ENCODE measurements at regions of chr6 and their contacts with region 1.

Region 1: DNA sequence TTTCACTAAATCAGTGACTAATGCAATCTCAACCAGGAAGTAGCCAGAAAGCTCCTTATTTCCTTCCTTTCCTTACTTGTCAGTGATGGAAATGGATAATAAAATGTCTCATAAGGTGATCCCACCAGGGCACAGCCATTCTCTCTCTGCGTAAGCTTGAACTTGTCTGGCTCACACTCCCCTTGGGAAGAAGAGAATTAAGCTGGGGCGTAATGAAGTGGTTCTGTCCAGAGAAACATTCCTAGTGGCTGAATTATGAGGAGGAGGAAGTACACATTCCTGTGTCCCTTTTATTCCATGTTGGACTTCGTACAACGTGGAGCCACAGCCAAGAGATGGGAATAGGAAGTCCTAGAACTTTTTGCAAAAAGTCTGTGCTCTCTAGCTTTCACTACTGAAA is 93.7 kb downstream of the MTHFD1L start:
- DNase-seq: no peak
- H3K4me3 ChIP-seq: no peak overlapping the region
- H3K27me3 ChIP-seq: no peaks in the 10 kb centered on the region
- CTCF ChIP-seq: no peak

Region 2: GRCh38 chr6:150266963-150267685 is 692.0 kb before region 1 on chr6:
- CTCF ChIA-PET with region 1: no interaction called
- POLR2A ChIA-PET with region 1: interaction called, 10 read pairs
- DNase-seq: peak; percentile 71
- H3K4me3 ChIP-seq: no peak overlapping the region
- H3K27me3 ChIP-seq: no peaks in the 10 kb centered on the region
- CTCF ChIP-seq: no peak

Region 3: GRCh38 chr6:150800674-150801314 is 158.4 kb before region 1 on chr6:
- CTCF ChIA-PET with region 1: no interaction called
- POLR2A ChIA-PET with region 1: no interaction called
- DNase-seq: no peak
- H3K4me3 ChIP-seq: no peak overlapping the region
- H3K27me3 ChIP-seq: no peaks in the 10 kb centered on the region
- CTCF ChIP-seq: no peak